MCF 10A (cell line): ENCODE measurements at regions of chr19 and their contacts with region 1.

Region 1: DNA sequence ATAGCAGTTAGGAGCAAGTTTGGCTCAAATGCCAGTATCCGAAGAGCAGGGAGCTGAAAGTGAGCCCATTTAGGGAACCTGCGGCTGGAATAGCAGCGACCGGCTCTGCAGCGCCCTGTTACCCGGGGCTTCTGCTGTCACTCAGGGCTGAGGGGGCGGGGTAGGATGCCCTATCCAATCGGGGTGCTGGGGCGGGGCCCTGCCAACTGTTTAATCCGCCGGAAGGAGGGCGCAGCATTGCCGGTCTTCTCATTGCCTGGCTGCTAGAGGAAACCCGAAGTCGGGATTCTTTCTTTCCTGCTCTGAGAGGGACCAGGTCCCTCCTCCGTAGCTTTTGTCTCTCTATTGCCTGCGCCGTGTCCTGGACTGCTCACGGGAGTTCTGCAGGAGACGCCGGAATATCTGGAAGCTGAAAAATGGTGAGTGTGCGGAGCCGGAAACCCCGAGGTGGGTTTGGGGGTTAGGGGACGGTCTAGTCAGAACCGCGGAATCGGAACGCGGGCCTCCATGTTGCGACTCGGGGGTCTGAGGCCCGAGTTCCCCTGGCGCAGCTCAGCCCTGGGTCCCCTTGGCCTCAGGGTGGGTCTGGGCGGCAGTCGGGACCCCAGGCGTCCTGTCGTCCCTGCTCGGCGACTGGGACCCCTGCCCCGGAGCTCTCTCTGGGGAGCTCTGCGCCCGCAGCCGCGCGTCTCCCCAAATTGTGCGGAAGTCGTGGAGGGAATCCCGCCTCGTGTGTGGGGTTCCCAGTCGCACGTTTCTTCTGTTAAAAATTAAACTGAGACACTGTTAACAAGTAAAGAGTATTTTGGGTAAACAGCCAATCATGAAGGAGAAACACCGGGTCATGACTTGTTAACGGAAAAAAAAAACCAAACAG is 22.8 kb downstream of the ZNF763 start:
- DNase-seq: peak; percentile 88
- H3K4me3 Mint-ChIP-seq: peak overlapping the region; percentile 80
- H3K27ac Mint-ChIP-seq: peak overlapping the region; percentile 20
- H3K4me1 Mint-ChIP-seq: no peaks in the 10 kb centered on the region
- H3K27me3 Mint-ChIP-seq: no peaks in the 10 kb centered on the region
- CTCF ChIP-seq: no peak

Region 2: DNA sequence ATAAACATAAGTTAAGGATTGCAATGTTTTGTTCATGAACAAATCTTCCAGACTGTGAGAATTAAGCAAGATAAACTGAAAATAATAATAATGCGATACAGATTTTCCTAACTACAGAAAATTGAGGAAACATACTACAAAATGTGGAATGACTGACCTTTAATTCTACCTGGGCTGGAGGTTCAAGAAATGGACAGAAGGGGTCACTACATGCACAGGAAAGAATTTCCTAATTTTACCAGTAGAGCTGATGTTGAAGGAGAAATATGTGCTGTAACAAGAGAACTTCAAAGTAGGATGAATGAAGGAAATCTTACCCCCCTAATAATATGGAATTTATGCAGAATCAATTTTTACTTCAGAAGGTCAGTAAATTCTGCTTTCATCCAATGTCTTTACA is 328.0 kb before region 1 on chr19:
- CTCF ChIA-PET with region 1: interaction called, 3 read pairs
- POLR2A ChIA-PET with region 1: no interaction called
- intact Hi-C with region 1: loop called (anchors 5 kb)
- DNase-seq: no peak
- H3K4me3 Mint-ChIP-seq: no peak overlapping the region
- H3K27ac Mint-ChIP-seq: no peak overlapping the region
- H3K4me1 Mint-ChIP-seq: no peaks in the 10 kb centered on the region
- H3K27me3 Mint-ChIP-seq: no peaks in the 10 kb centered on the region
- CTCF ChIP-seq: peak; percentile 31

Region 3: GRCh38 chr19:11699931-11700794 is 287.5 kb before region 1 on chr19:
- CTCF ChIA-PET with region 1: interaction called, 6 read pairs
- POLR2A ChIA-PET with region 1: interaction called, 6 read pairs
- intact Hi-C with region 1: loop called (anchors 1 kb)
- DNase-seq: peak; percentile 45
- H3K4me3 Mint-ChIP-seq: no peak overlapping the region
- H3K27ac Mint-ChIP-seq: no peak overlapping the region
- H3K4me1 Mint-ChIP-seq: no peaks in the 10 kb centered on the region
- H3K27me3 Mint-ChIP-seq: no peaks in the 10 kb centered on the region
- CTCF ChIP-seq: peak; percentile 62

Region 4: DNA sequence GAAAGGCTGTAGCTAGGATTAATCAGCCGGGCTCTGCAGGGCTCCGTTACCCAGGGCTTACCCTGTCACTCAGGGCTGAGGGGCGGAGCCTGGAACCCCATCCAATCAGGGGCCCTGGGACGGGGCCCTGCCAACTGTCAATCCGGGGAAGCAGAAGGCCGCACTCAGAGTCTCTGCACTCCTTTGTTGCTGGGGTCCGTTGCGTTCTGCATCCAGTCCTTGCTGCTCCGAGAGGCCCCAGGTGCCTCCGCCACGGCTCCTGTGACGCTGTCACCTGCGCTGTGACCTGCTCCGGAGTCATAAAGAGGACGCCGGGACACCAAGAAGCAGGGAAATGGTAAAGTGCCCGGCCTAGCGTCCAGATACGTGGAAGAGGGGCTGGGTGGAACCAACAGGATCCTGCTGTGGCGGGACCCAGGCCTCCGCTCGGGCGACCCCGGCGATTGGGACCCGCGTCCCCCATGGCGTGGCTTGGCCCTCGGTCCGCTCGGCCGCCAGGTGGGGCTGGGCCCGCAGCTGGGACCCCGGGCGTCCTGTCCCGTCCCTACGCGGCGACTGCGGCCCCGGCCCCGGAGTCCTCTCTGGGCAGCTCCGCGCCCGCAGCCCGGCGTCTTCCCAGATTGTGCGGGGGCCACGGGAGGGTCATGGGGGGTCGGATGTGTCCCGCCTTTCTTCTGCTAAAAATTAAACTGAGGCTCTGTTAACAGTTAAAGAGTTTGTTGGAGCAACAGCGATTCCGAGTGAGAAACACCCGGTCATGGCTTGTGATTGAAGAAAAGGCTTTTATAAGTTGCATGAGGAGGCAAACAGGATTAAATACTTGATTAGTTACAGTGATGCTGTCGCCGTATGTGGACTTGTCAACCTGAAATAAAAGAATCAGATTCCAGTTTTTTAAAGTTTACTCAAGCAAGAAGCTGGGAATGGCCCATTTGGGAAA is 189.0 kb before region 1 on chr19 and contains the start of gene ZNF491:
- CTCF ChIA-PET with region 1: interaction called, 24 read pairs
- POLR2A ChIA-PET with region 1: interaction called, 3 read pairs
- intact Hi-C with region 1: loop called (anchors 1 kb)
- DNase-seq: no peak
- H3K4me3 Mint-ChIP-seq: no peak within 1 kb of the TSS
- H3K27ac Mint-ChIP-seq: no peak within 1 kb of the TSS
- H3K4me1 Mint-ChIP-seq: no peaks in the 10 kb centered on the region
- H3K27me3 Mint-ChIP-seq: no peaks in the 10 kb centered on the region
- CTCF ChIP-seq: no peak
- total RNA-seq, gene ZNF491: not detected in 2 replicates

Region 5: DNA sequence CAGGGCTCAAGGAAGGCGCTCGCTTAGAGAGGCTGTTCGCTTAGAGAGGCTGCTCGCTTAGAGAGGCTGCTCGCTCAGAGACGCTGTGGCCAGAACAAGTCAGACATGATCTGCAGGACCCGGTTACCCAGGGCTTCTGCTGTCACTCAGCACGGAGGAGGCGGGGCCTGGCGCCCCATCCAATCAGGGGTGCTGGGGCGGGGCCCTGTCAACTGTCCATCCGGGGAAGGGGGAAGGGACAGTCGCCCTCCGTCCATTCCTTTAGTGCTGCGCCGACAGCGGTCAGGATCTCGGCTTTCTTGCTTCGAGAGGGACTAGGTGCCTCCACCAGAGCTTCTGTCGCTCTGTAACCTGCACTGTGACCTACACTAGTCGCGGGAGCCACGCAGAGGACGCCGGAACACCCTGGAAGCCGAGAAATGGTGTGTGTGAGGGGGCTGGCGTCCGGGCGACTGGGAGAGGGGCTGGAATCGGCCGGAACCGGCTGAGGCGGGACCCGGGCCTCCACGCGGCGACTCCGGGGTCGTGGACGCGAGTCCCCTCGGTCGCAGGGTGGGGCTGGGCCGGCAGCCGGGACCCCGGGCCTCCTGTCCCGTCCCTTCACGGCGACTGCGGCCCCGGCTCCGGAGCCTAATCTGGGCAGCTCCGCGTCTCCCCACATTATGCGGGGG is 173.5 kb before region 1 on chr19 and contains the start of gene ZNF440:
- CTCF ChIA-PET with region 1: interaction called, 7 read pairs
- POLR2A ChIA-PET with region 1: no interaction called
- intact Hi-C with region 1: loop called (anchors 5 kb)
- DNase-seq: peak; percentile 81
- H3K4me3 Mint-ChIP-seq: peak within 1 kb of the TSS; percentile 82
- H3K27ac Mint-ChIP-seq: peak within 1 kb of the TSS; percentile 69
- H3K4me1 Mint-ChIP-seq: no peaks in the 10 kb centered on the region
- H3K27me3 Mint-ChIP-seq: no peaks in the 10 kb centered on the region
- CTCF ChIP-seq: no peak
- total RNA-seq, gene ZNF440: 2.6 and 3.5 TPM in 2 replicates

Region 6: DNA sequence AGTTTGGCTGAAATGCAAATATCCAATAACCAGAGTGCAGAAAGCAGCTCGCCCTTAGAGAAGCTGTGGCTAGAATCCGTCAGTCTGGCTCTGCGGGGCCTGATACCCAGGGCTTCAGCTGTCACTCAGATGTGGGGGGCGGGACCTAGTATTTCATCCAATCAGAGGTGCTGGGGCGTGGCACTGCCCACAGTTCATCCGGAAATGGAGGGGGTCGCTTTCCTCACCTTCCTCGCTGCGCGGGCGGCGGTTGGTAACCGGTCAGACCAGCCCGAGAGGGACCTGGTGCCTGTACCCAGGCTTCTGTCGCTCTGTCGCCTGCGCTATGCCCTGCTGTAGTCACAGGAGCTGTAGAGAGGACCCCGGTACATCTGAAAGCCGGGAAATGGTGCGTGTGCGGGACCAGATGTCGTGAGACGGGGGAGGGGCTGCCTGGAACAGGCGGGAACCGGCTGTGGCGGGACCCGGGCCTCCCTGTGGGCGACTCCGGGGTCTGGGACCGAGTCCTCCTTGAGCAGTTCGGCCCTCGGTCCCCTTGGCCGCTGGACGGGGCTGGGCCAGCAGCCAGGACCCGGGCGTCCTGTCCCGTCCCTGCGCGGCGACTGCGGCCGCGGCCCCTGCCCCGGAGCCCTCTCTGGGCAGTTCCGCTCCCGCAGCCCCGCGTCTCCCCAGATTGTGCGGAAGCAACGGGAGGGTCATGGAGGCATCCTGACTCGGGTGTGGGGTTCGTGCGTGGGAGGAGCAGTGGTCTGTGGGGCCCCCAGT is 62.6 kb before region 1 on chr19 and contains the start of gene ZNF700:
- CTCF ChIA-PET with region 1: interaction called, 142 read pairs
- POLR2A ChIA-PET with region 1: interaction called, 67 read pairs
- intact Hi-C with region 1: loop called (anchors 1 kb)
- DNase-seq: peak; percentile 97
- H3K4me3 Mint-ChIP-seq: peak within 1 kb of the TSS; percentile 82
- H3K27ac Mint-ChIP-seq: peak within 1 kb of the TSS; percentile 39
- H3K4me1 Mint-ChIP-seq: peaks cover 16% of the 10 kb centered on the region
- H3K27me3 Mint-ChIP-seq: no peaks in the 10 kb centered on the region
- CTCF ChIP-seq: no peak
- total RNA-seq, gene ZNF700: 5.6 and 5.9 TPM in 2 replicates

Region 7: GRCh38 chr19:12098040-12098439 is 110.4 kb after region 1 on chr19:
- CTCF ChIA-PET with region 1: no interaction called
- POLR2A ChIA-PET with region 1: no interaction called
- intact Hi-C with region 1: no loop called
- DNase-seq: no peak
- H3K4me3 Mint-ChIP-seq: no peak overlapping the region
- H3K27ac Mint-ChIP-seq: no peak overlapping the region
- H3K4me1 Mint-ChIP-seq: no peaks in the 10 kb centered on the region
- H3K27me3 Mint-ChIP-seq: no peaks in the 10 kb centered on the region
- CTCF ChIP-seq: no peak